ENCODE measurements at regions of chr11 and their contacts with region 1.

Region 1: DNA sequence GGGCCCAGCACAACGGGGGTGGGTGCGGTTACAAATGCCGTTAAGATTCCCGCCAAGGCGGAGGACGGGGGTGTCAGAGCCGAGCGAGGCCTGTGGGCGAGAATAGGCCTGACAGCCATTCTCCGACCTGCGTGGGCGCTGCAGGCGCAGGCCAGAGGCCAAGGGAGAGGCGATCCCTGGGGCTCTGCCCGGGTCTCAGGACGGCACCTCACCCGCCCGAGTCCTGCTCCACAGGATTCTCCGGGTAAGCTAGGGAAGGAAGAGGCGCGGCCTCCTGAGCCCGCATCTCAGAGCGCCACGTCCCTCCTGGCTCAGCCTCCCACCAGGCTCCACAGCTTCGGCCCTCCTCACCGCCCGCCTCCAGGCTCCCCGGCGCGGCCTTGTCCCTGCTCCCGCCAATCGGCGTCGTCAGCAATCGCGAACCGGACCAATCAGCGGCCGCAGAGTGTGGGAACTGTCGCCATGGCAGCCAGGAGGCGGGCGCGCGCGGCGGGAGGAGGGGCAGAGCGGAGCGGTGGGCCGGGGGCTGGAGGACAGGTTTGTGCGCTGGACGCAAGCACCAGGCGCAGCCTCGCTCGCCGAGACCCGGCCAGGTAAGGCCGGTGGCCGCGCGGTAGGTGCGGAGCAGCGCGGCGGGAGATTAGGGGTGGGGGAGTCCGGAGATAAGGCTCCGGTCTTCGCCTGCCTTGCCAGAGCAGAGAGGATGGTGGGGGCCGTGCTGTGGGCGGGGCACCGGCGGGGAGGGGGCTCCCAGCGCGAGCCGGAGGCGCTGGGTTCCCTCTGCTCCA is at the start of gene NUCB2:
- DNase-seq: peak; percentile 96 to 97 (median 96)
- ATAC-seq: peak; percentile 97
- H3K4me3 ChIP-seq: peak within 1 kb of the TSS; percentile 66
- H3K27ac ChIP-seq: peak within 1 kb of the TSS; percentile 83
- H3K4me1 ChIP-seq: peaks cover 13 to 22% of the 10 kb centered on the region in 2 experiments
- H3K27me3 ChIP-seq: no peaks in the 10 kb centered on the region
- CTCF ChIP-seq: no peak
- EP300 ChIP-seq: peak; percentile 33; the same call in 1 of the 2 replicates
- POLR2A ChIP-seq: peak; percentile 92
- RAD21 ChIP-seq: peak in 1 of 2 experiments; percentile 9; a peak in 1 of 4 replicates
- polyA plus RNA-seq, gene NUCB2: 89.0 to 95.5 TPM

Region 2: DNA sequence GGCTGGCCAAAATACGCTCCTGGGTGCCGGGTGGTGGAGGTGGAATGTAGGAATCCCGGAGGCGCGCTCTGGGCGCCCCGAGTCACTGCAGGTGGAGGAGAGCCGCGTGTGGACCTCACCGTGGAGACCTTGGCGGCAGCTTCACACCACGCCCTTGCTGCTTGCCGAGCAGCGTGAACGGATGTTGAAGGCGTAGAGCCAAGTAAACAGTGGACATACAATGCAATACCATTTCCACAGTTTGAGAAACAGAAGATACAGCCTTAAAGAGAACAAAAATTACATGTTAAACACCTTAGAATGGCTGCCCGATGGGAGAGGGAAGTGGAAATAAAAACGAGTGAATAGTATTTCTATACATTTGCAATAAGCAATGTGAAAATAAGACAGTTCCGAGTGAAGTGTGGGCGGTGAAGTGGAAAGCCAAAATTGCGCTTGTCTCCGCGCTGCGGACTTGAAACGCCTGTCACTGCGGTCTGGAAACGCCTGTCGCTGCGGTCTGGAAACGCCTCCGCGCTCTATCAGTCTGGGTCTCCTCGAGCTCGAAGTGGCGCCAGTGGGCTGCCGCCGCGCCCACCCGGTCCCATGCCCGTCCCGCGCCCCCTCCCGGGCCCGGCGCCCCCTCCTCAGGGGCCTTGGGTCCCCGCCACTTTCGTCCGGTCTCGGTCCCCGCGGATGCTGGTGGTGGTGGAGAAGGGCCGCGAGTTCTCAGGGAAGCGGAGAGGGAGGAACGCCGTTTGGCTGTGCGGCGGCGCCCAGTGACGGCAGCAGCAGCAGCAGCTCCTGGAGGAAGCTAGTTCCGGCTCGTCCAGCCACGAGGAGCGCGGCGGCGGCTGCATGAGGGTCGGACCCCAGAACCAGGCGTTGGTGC is 76.8 kb after region 1 on chr11:
- CTCF ChIA-PET with region 1: no interaction called
- POLR2A ChIA-PET with region 1: no interaction called
- in situ Hi-C with region 1: no loop called
- intact Hi-C with region 1: loop called (anchors 2 kb)
- DNase-seq: peak; percentile 58 to 89 (median 66)
- ATAC-seq: peak; percentile 80
- H3K4me3 ChIP-seq: peak overlapping the region; percentile 63
- H3K27ac ChIP-seq: peak overlapping the region; percentile 74
- H3K4me1 ChIP-seq: peaks cover 7 to 25% of the 10 kb centered on the region in 2 experiments; a peak in 4 of 5 replicates
- H3K27me3 ChIP-seq: no peaks in the 10 kb centered on the region
- CTCF ChIP-seq: no peak
- EP300 ChIP-seq: no peak
- POLR2A ChIP-seq: peak; percentile 88
- RAD21 ChIP-seq: no peak

Region 3: GRCh38 chr11:17548444-17548843 is 272.0 kb after region 1 on chr11:
- CTCF ChIA-PET with region 1: no interaction called
- POLR2A ChIA-PET with region 1: no interaction called
- in situ Hi-C with region 1: no loop called
- intact Hi-C with region 1: no loop called
- DNase-seq: peak; percentile 32 to 38 (median 34)
- ATAC-seq: peak; percentile 41; the same call in 1 of the 3 replicates
- H3K4me3 ChIP-seq: no peak overlapping the region
- H3K27ac ChIP-seq: no peak overlapping the region
- H3K4me1 ChIP-seq: peaks cover 0 to 20% of the 10 kb centered on the region in 2 experiments; a peak in 3 of 5 replicates
- H3K27me3 ChIP-seq: peaks cover 4 to 38% of the 10 kb centered on the region in 2 experiments; a peak in 3 of 5 replicates
- CTCF ChIP-seq: peak in 2 of 3 experiments; percentile 29 to 53; a peak in 4 of 6 replicates
- EP300 ChIP-seq: no peak
- POLR2A ChIP-seq: no peak
- RAD21 ChIP-seq: peak in 1 of 2 experiments; percentile 13; a peak in 1 of 4 replicates

Measured in K562 (cell line).